ENCODE measurements at regions of chr11 and their contacts with region 1.

Region 1: GRCh38 chr11:92941676-92942571 is 27.5 kb upstream of the MTNR1B start:
- DNase-seq: no peak
- H3K4me3 ChIP-seq: no peak overlapping the region
- H3K27ac ChIP-seq: no peak overlapping the region
- H3K4me1 ChIP-seq: peaks cover 0 to 5% (median under 1%) of the 10 kb centered on the region in 4 experiments; a peak in 2 of 7 replicates
- H3K27me3 ChIP-seq: no peaks in the 10 kb centered on the region; a peak in 1 of 7 replicates
- CTCF ChIP-seq: peak; percentile 2 to 72 (median 64)
- EP300 ChIP-seq: no peak
- POLR2A ChIP-seq: no peak
- RAD21 ChIP-seq: peak; percentile 85 to 87

Region 2: DNA sequence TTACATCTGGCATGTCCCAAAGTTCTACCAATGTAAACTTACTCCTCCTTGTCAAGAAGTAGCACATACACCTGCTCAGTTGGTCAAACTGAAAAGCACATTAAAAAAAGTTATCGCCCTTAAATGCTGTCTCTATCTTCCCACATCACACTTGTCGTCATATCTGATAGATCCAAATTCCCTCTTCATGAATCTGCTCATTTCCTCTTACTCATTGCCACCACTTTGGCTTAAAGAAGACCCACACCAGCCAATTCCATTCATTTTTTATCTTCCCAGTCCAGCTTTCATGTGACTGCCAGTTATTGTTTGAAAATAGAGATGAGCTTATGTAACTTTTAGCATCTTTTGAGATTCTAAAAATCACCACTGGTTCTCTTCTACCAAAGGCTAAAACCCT is 278.4 kb before region 1 on chr11:
- CTCF ChIA-PET with region 1: no interaction called
- POLR2A ChIA-PET with region 1: no interaction called
- DNase-seq: no peak
- H3K4me3 ChIP-seq: no peak overlapping the region
- H3K27ac ChIP-seq: no peak overlapping the region
- H3K4me1 ChIP-seq: peaks cover 0 to 6% (median 3%) of the 10 kb centered on the region in 4 experiments; a peak in 3 of 7 replicates
- H3K27me3 ChIP-seq: no peaks in the 10 kb centered on the region
- CTCF ChIP-seq: no peak
- EP300 ChIP-seq: no peak
- POLR2A ChIP-seq: no peak
- RAD21 ChIP-seq: no peak

Region 3: DNA sequence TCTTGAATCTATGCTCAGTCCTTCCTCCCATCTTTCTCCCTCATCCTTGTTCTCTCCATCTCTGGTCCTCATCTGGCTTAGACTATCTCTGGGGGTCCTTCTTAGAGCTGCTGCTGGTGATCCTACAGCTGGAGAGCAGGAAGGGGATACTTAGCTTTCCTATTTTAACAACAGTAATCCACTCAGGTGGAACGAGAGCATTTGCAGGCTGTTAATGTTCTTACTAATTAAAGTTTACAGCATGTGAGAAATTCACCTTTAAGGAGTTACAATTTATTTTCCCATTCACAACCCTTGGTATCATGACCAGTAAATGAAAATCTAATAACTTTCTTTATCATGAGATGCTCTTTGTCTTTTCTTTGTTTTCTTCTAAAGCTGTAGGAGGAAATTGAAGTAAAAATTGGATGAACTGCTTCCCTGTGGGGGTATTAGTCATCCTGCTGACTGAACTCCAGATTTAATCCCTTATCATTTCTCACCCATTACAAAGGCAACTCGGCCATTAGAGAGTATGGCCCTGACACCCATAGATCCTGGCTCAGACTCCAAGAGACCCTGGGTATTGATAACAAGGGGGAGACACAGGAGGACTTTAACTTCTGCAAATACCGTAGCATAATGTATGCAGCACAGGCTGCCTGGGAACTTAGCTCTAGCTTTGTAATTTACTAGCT is 10.0 kb before region 1 on chr11:
- CTCF ChIA-PET with region 1: interaction called, 28 read pairs
- POLR2A ChIA-PET with region 1: no interaction called
- DNase-seq: no peak
- H3K4me3 ChIP-seq: no peak overlapping the region
- H3K27ac ChIP-seq: no peak overlapping the region
- H3K4me1 ChIP-seq: no peaks in the 10 kb centered on the region
- H3K27me3 ChIP-seq: no peaks in the 10 kb centered on the region; a peak in 1 of 7 replicates
- CTCF ChIP-seq: no peak
- EP300 ChIP-seq: no peak
- POLR2A ChIP-seq: no peak
- RAD21 ChIP-seq: no peak

Region 4: DNA sequence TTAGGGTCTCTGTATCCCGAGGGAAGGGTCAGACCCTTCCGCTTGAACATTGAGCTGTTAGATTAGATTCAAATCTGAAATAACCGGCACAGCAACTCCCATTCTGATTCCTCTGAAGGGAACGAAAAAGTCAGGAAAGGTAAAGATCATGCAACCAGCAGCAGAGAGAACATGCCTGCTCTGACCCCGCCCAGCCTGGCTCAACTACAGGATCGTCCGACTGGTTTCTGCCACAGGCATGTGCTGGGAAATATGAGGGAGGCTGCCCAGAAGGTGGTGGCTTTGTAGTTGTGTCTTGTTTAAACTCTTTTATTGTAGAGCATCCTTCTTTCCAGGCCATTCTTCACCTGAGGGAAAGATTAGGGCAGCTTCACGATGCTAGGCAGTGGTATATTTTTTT is 22.5 kb after region 1 on chr11:
- CTCF ChIA-PET with region 1: interaction called, 39 read pairs
- POLR2A ChIA-PET with region 1: no interaction called
- DNase-seq: no peak
- H3K4me3 ChIP-seq: no peak overlapping the region
- H3K27ac ChIP-seq: no peak overlapping the region
- H3K4me1 ChIP-seq: peaks cover 0 to 2% (median 1%) of the 10 kb centered on the region in 4 experiments; a peak in 3 of 7 replicates
- H3K27me3 ChIP-seq: peaks cover 5 to 13% (median 9%) of the 10 kb centered on the region in 4 experiments
- CTCF ChIP-seq: no peak
- EP300 ChIP-seq: no peak
- POLR2A ChIP-seq: no peak
- RAD21 ChIP-seq: no peak

Region 5: DNA sequence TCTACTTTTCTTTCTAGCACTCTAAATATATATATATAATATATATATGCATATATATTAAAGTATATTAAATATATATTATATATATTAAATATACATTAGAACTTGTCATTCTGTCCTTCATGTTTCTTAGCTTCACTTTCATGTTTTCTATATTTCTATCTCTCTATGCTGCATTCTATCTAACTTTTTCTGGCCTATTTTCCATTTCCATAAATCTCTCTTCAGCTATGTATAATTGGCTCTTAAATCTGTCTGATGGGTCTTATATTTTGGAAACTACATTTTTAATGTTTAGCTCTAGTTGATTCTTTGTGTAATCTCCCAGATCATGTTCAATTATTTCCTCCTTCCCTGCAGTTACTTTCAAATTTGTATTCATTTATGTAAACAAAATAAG is 99.8 kb after region 1 on chr11:
- CTCF ChIA-PET with region 1: no interaction called
- POLR2A ChIA-PET with region 1: no interaction called
- DNase-seq: no peak
- H3K4me3 ChIP-seq: no peak overlapping the region
- H3K27ac ChIP-seq: no peak overlapping the region
- H3K4me1 ChIP-seq: no peaks in the 10 kb centered on the region
- H3K27me3 ChIP-seq: no peaks in the 10 kb centered on the region
- CTCF ChIP-seq: no peak
- EP300 ChIP-seq: no peak
- POLR2A ChIP-seq: no peak
- RAD21 ChIP-seq: no peak

Region 6: DNA sequence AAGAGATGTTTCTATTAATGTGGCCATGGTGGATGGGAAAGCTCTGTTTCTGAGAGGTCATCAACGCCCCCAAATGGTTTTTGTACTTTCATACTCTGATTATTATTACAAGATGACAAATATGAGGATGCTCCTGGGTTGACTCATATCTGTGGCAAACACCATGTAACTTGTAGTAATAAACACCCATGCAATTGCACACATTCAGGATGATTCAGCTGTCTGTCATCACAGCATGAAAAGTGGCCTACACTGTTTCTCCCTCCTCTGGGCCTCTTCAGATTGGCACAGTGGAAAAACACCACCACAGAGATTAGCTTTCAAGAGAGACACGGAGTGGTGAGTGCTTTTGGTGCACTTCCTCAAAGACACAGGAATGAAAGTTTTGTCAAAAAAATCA is 113.0 kb after region 1 on chr11:
- CTCF ChIA-PET with region 1: interaction called, 11 read pairs
- POLR2A ChIA-PET with region 1: no interaction called
- DNase-seq: no peak
- H3K4me3 ChIP-seq: no peak overlapping the region
- H3K27ac ChIP-seq: no peak overlapping the region
- H3K4me1 ChIP-seq: no peaks in the 10 kb centered on the region
- H3K27me3 ChIP-seq: no peaks in the 10 kb centered on the region
- CTCF ChIP-seq: no peak
- EP300 ChIP-seq: no peak
- POLR2A ChIP-seq: no peak
- RAD21 ChIP-seq: no peak

Region 7: GRCh38 chr11:93116641-93117441 is 174.9 kb after region 1 on chr11:
- CTCF ChIA-PET with region 1: interaction called, 15 read pairs
- POLR2A ChIA-PET with region 1: interaction called, 5 read pairs
- DNase-seq: peak; percentile 49 to 60
- H3K4me3 ChIP-seq: peak overlapping the region in 2 of 4 experiments; percentile 12 to 47; a peak in 3 of 8 replicates
- H3K27ac ChIP-seq: peak overlapping the region; percentile 70
- H3K4me1 ChIP-seq: peaks cover 2 to 30% (median 25%) of the 10 kb centered on the region in 4 experiments
- H3K27me3 ChIP-seq: no peaks in the 10 kb centered on the region
- CTCF ChIP-seq: no peak
- EP300 ChIP-seq: no peak
- POLR2A ChIP-seq: peak; percentile 68 to 99
- RAD21 ChIP-seq: no peak; a peak in 1 of 4 replicates

Region 8: GRCh38 chr11:93169950-93170561 is 228.1 kb after region 1 on chr11:
- CTCF ChIA-PET with region 1: interaction called, 14 read pairs
- POLR2A ChIA-PET with region 1: no interaction called
- DNase-seq: no peak
- H3K4me3 ChIP-seq: no peak overlapping the region
- H3K27ac ChIP-seq: no peak overlapping the region
- H3K4me1 ChIP-seq: no peaks in the 10 kb centered on the region
- H3K27me3 ChIP-seq: no peaks in the 10 kb centered on the region
- CTCF ChIP-seq: peak in 1 of 3 experiments; percentile 36; a peak in 2 of 4 replicates
- EP300 ChIP-seq: no peak
- POLR2A ChIP-seq: no peak
- RAD21 ChIP-seq: peak; percentile 55 to 63

Region 9: DNA sequence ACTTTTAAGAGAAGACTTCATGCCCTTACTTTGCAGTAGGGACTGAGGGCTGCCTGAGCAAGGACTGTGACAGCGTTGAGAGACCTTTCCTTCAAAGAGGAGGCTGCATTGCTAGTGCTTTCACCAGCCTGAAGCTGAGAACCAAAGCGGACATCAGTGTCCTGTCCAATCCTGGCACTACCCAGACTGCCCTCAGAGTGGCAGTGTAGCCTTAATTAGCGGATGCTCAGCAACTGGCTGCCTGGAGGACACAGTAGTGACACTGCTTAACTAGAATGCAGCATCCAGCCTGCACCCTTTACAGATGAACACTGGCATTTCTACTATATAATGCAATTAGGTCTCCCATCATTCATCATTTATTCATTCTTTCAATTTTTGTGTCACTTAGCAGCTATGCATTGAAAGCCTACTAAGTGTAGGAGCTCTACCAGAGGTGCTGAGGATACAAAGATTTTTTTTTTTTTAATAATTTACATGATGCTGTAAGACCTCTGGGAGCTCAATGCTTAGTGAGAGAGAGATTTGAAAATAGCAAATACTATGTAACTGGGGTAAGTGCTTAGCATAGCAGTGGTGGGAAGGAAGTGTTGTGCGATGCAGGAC is 292.8 kb after region 1 on chr11:
- CTCF ChIA-PET with region 1: interaction called, 12 read pairs
- POLR2A ChIA-PET with region 1: no interaction called
- DNase-seq: peak; percentile 49 to 85
- H3K4me3 ChIP-seq: no peak overlapping the region
- H3K27ac ChIP-seq: no peak overlapping the region
- H3K4me1 ChIP-seq: peaks cover 0 to 4% (median 2%) of the 10 kb centered on the region in 4 experiments; a peak in 4 of 7 replicates
- H3K27me3 ChIP-seq: no peaks in the 10 kb centered on the region
- CTCF ChIP-seq: peak; percentile 96 to 99 (median 98)
- EP300 ChIP-seq: no peak
- POLR2A ChIP-seq: no peak
- RAD21 ChIP-seq: peak; percentile 99

Measured in H1 (cell line).